ENCODE measurements at regions of chr4 and their contacts with region 1.

Region 1: DNA sequence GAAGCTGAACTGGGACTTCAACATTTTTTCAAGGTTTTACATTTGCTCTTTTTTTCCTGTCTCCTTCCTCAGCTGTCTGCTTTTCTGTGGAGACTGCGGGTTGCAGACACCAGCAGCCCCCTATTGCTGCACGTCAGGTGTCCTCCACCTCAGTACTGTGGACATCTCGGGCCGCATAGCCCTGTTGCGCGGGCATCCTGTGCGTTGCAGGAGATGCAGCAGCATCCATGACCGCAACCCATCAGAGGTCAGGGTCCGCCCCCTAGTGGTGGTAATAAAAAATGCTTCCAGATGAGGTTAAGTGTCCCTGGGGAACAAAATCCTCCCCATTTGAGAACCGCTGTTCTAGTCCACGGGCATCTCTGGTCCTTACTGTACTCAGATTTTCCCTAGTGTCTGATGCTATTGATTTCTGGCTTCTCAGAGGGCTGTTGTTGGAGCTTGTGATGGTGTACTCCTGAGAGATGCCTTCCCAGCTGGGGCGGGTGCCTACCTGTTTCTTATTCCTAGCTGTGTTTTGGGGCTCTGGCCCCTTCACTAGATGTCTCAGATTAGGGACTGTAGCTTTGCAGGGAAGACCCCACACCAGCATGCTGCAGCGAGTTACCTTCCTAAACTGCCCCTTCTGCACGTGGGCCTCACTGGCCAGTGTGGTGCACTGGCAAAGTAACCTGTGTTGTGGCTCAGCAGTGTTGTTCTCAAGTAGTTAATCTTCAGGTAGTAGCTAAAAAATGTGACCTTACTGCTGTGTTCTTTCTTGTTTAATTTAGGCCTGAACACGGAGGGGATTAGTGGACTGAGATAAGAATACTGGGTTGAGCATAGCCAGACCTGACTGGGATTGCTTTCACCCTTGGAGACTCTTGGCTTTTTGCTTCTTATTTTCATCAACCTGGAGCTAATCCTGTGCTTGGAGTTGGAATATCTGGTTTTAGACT is 28.2 kb downstream of the NSD2 start:
- DNase-seq: peak; percentile 53 to 82
- H3K4me3 ChIP-seq: no peak overlapping the region
- H3K27ac ChIP-seq: no peak overlapping the region
- H3K4me1 ChIP-seq: no peaks in the 10 kb centered on the region
- H3K27me3 ChIP-seq: no peaks in the 10 kb centered on the region
- CTCF ChIP-seq: peak; percentile 73 to 87 (median 83)
- EP300 ChIP-seq: no peak
- POLR2A ChIP-seq: no peak
- RAD21 ChIP-seq: peak; percentile 88 to 92

Region 2: GRCh38 chr4:1842993-1843448 is 56.4 kb before region 1 on chr4:
- CTCF ChIA-PET with region 1: interaction called, 35 read pairs
- POLR2A ChIA-PET with region 1: no interaction called
- DNase-seq: no peak
- H3K4me3 ChIP-seq: no peak overlapping the region
- H3K27ac ChIP-seq: no peak overlapping the region
- H3K4me1 ChIP-seq: no peaks in the 10 kb centered on the region
- H3K27me3 ChIP-seq: no peaks in the 10 kb centered on the region
- CTCF ChIP-seq: no peak
- EP300 ChIP-seq: no peak
- POLR2A ChIP-seq: no peak
- RAD21 ChIP-seq: no peak

Region 3: GRCh38 chr4:1872870-1873269 is 26.5 kb before region 1 on chr4:
- CTCF ChIA-PET with region 1: interaction called, 39 read pairs
- POLR2A ChIA-PET with region 1: interaction called, 3 read pairs
- DNase-seq: no peak
- H3K4me3 ChIP-seq: peak overlapping the region; percentile 63 to 100 (median 78); a peak in 5 of 8 replicates
- H3K27ac ChIP-seq: no peak overlapping the region
- H3K4me1 ChIP-seq: peaks cover 0 to 9% (median 5%) of the 10 kb centered on the region in 4 experiments; a peak in 5 of 7 replicates
- H3K27me3 ChIP-seq: peaks cover 0 to 15% (median 13%) of the 10 kb centered on the region in 4 experiments; a peak in 6 of 7 replicates
- CTCF ChIP-seq: no peak
- EP300 ChIP-seq: no peak
- POLR2A ChIP-seq: no peak
- RAD21 ChIP-seq: no peak

Region 4: DNA sequence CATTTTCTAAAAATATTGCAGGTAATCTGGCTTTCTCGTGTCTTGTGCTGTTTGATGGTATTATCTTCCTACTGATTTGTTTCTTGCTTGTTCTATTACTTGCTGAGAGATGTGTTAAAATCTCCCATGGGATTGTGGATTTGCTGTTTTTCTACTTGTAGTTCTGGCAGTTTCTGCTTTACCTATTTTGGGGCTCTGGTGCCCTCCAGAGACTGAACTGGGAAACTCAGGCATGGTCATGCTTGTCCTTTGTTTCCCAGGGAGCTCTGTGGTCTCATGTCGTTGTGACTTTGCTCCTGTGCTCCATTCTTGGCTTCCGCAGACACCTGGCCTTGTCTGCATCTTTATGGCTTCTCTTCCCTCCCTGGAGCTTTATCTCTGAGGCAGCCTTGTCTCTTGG is 11.2 kb after region 1 on chr4:
- CTCF ChIA-PET with region 1: interaction called, 69 read pairs
- POLR2A ChIA-PET with region 1: interaction called, 3 read pairs
- DNase-seq: peak; percentile 21 to 64
- H3K4me3 ChIP-seq: no peak overlapping the region
- H3K27ac ChIP-seq: peak overlapping the region; percentile 24; the same call in 1 of the 2 replicates
- H3K4me1 ChIP-seq: no peaks in the 10 kb centered on the region
- H3K27me3 ChIP-seq: no peaks in the 10 kb centered on the region
- CTCF ChIP-seq: peak; percentile 51 to 78 (median 68)
- EP300 ChIP-seq: no peak
- POLR2A ChIP-seq: no peak
- RAD21 ChIP-seq: peak; percentile 75

Measured in H1 (cell line).